CD4-positive, alpha-beta memory T cell (primary cell): ENCODE measurements at regions of chr7 and their contacts with region 1.

Region 1: GRCh38 chr7:5838761-5839500 is 41.7 kb upstream of the OCM start:
- DNase-seq: no peak
- H3K4me3 ChIP-seq: no peak overlapping the region
- H3K4me3 Mint-ChIP-seq: peak overlapping the region; percentile 35 to 84 (median 58)
- H3K27ac ChIP-seq: no peak overlapping the region
- H3K27ac Mint-ChIP-seq: peak overlapping the region; percentile 31 to 96 (median 85)
- H3K4me1 ChIP-seq: peaks cover 40% of the 10 kb centered on the region
- H3K4me1 Mint-ChIP-seq: peaks cover 23 to 40% (median 27%) of the 10 kb centered on the region in 4 donors
- H3K27me3 ChIP-seq: no peaks in the 10 kb centered on the region
- H3K27me3 Mint-ChIP-seq: no peaks in the 10 kb centered on the region

Region 2: DNA sequence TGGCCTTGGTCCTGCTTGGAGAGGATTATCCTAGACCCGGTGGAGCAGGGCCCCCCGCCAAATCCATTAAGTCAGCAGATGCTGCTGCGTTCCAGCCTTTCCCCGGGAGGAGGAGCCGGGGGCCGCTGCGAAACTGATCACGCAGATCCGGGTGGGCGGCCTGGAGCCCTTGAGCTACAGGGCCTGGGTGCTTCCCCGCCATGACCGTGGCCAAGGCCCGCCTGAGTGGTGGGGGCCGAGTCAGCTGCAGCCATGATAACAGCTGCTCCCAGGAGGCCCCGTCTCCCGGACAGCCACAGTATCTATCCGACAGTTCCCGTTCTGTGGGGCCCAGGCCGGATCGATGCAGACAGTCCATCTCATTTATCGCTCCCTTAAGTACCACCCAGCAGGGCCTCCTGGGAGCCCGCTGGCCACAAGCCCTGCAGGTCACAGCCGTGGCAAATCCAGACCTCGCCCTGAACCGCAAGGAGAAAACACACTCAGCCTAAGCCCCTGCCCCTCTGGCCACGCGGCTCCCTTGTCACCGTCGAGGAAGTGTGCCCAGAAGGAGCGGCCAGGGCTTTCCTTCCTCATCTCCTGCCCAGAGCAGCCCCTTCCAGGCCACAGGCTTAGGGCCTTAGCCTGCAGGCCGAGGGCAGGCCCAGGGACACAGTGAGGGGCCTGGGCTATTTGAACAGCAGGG is 590.6 kb before region 1 on chr7:
- CTCF ChIA-PET with region 1: no interaction called
- POLR2A ChIA-PET with region 1: no interaction called
- intact Hi-C with region 1: no loop called
- DNase-seq: no peak
- H3K4me3 ChIP-seq: no peak overlapping the region
- H3K4me3 Mint-ChIP-seq: no peak overlapping the region
- H3K27ac ChIP-seq: no peak overlapping the region
- H3K27ac Mint-ChIP-seq: peak overlapping the region in 1 of 7 donors; percentile 22
- H3K4me1 ChIP-seq: no peaks in the 10 kb centered on the region
- H3K4me1 Mint-ChIP-seq: no peaks in the 10 kb centered on the region
- H3K27me3 ChIP-seq: no peaks in the 10 kb centered on the region
- H3K27me3 Mint-ChIP-seq: peaks cover 0 to 4% of the 10 kb centered on the region in 2 donors

Region 3: DNA sequence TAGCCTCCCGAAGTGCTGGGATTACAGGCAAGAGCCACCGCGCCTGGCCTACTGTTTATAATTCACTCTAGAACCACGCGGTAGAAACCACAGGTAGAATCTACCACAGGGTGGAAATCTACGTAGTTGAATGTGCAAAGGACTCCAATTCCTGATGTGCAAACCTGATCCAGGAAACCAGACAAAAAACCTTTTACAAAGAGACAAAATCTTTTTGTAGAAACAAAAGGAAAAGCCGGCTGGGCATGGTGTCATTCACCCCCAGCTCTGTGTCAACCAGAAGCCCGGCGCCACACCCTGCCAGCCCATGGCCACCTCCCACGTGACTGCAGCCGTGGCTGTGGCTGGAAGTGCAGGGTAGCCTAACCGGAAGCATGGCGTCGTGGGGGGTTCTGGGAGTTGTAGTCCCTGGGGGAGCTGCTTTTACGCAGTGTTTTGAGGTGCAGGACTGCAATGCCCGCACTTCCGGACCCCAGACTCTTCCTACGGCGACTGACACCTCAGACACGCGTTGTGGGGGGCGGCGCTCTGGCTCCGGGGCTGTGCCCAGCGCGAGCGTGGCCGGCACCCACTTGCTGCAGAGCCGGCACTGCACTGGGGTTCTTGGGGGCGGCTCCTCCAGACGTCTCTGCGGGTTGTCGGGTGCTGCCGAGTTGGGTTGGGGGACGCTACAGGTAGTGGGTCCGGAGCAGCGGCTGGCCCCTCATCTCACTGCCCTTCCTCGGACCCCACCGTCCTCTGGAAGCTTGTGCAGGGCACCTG is 16.0 kb before region 1 on chr7:
- CTCF ChIA-PET with region 1: interaction called, 25 read pairs
- POLR2A ChIA-PET with region 1: interaction called, 90 read pairs
- intact Hi-C with region 1: loop called (anchors 1 kb)
- DNase-seq: peak; percentile 98 to 100 (median 99)
- H3K4me3 ChIP-seq: peak overlapping the region; percentile 79 to 88
- H3K4me3 Mint-ChIP-seq: peak overlapping the region; percentile 84 to 95 (median 91)
- H3K27ac ChIP-seq: peak overlapping the region; percentile 79
- H3K27ac Mint-ChIP-seq: peak overlapping the region; percentile 81 to 98 (median 93)
- H3K4me1 ChIP-seq: peaks cover 33% of the 10 kb centered on the region
- H3K4me1 Mint-ChIP-seq: peaks cover 13 to 42% (median 27%) of the 10 kb centered on the region in 4 donors
- H3K27me3 ChIP-seq: no peaks in the 10 kb centered on the region
- H3K27me3 Mint-ChIP-seq: no peaks in the 10 kb centered on the region

Region 4: GRCh38 chr7:6008668-6009611 is 170.0 kb after region 1 on chr7 and contains the starts of genes AIMP2 and PMS2:
- CTCF ChIA-PET with region 1: no interaction called
- POLR2A ChIA-PET with region 1: no interaction called
- intact Hi-C with region 1: no loop called
- DNase-seq: peak; percentile 93 to 97 (median 94)
- H3K4me3 ChIP-seq: peak within 1 kb of the TSS; percentile 70 to 73
- H3K4me3 Mint-ChIP-seq: peak within 1 kb of the TSS; percentile 92 to 97 (median 95)
- H3K27ac ChIP-seq: peak within 1 kb of the TSS; percentile 86
- H3K27ac Mint-ChIP-seq: peak within 1 kb of the TSS; percentile 93 to 98 (median 97)
- H3K4me1 ChIP-seq: peaks cover 21% of the 10 kb centered on the region
- H3K4me1 Mint-ChIP-seq: peaks cover 18 to 37% (median 25%) of the 10 kb centered on the region in 4 donors
- H3K27me3 ChIP-seq: no peaks in the 10 kb centered on the region
- H3K27me3 Mint-ChIP-seq: no peaks in the 10 kb centered on the region
- total RNA-seq, gene AIMP2: 10.7 to 10.8 TPM
- total RNA-seq, gene PMS2: 22.7 to 23.2 TPM